ENCODE measurements at regions of chr3 and their contacts with region 1.

Region 1: DNA sequence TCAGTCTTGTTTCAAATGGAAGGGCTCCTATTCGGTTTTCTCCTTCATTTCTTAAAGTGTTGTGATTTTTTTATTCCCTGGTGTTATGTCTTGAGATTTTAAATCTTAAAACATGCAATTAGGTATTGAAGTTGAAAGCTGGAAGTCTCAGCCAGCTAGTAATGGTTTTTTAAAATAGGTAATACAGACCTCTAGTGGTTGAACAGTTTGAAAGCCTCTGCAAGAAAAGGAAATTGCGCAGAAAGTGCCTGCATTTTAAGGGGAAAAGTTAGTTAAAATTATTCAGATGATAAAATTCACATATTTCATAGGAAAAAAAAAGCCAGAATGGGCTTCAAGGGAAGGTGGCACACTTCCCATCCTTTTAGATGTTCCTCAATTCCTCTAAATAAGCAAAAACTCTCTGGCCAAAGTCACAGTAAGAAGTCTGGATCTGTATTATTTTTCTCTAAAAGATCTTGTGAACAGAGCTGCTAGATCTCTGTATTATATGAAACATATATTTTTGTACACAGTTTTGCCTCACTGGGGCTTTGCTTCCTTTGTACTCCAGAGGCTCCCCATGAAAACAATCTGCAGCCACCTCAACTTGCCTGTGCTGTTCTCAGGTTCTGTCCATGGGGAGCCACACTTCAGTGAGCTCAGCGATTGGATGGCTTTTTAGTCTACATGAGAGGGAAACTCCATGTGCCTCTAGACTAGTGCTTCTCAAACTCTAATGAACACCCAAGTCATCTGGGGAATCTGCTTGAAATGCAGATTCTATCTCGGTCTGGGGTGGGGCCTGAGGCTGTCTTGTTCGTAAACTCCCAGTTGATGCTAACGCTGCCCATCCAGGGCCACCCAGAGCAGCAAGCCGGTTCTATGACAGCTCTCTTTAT is 21.5 kb downstream of the AGTR1 start:
- DNase-seq: peak; percentile 12
- H3K4me3 Mint-ChIP-seq: no peak overlapping the region
- H3K27ac Mint-ChIP-seq: no peak overlapping the region
- H3K4me1 Mint-ChIP-seq: no peaks in the 10 kb centered on the region
- H3K27me3 Mint-ChIP-seq: peaks cover 71% of the 10 kb centered on the region
- CTCF ChIP-seq: peak; percentile 44

Region 2: GRCh38 chr3:148379763-148380382 is 339.3 kb before region 1 on chr3:
- CTCF ChIA-PET with region 1: interaction called, 48 read pairs
- POLR2A ChIA-PET with region 1: no interaction called
- intact Hi-C with region 1: loop called (anchors 1 kb)
- DNase-seq: peak; percentile 59
- H3K4me3 Mint-ChIP-seq: no peak overlapping the region
- H3K27ac Mint-ChIP-seq: no peak overlapping the region
- H3K4me1 Mint-ChIP-seq: no peaks in the 10 kb centered on the region
- H3K27me3 Mint-ChIP-seq: peaks cover 30% of the 10 kb centered on the region
- CTCF ChIP-seq: peak; percentile 38

Region 3: DNA sequence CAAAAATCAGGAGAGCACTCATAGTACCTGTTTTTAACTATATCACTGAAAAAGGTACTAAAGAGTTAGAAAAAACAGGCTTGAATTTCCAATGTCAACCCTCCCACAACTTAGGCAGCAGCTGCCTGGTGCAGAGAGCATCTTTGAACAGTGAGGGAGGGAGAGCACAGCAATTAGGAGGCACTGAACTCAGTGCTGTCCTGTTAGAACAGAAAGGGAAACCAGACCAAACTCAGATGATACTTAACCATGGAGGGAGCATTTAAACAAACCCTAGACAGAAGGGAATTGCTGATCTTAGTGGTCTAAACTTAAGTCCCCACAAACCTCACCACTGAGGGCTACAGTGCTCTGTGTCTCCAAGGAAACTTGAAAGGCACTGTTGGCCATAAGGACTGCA is 200.7 kb before region 1 on chr3:
- CTCF ChIA-PET with region 1: no interaction called
- POLR2A ChIA-PET with region 1: no interaction called
- intact Hi-C with region 1: no loop called
- DNase-seq: no peak
- H3K4me3 Mint-ChIP-seq: no peak overlapping the region
- H3K27ac Mint-ChIP-seq: no peak overlapping the region
- H3K4me1 Mint-ChIP-seq: no peaks in the 10 kb centered on the region
- H3K27me3 Mint-ChIP-seq: no peaks in the 10 kb centered on the region
- CTCF ChIP-seq: no peak

Measured in MCF 10A (cell line).